ENCODE measurements at regions of chr12 and their contacts with region 1.

Region 1: DNA sequence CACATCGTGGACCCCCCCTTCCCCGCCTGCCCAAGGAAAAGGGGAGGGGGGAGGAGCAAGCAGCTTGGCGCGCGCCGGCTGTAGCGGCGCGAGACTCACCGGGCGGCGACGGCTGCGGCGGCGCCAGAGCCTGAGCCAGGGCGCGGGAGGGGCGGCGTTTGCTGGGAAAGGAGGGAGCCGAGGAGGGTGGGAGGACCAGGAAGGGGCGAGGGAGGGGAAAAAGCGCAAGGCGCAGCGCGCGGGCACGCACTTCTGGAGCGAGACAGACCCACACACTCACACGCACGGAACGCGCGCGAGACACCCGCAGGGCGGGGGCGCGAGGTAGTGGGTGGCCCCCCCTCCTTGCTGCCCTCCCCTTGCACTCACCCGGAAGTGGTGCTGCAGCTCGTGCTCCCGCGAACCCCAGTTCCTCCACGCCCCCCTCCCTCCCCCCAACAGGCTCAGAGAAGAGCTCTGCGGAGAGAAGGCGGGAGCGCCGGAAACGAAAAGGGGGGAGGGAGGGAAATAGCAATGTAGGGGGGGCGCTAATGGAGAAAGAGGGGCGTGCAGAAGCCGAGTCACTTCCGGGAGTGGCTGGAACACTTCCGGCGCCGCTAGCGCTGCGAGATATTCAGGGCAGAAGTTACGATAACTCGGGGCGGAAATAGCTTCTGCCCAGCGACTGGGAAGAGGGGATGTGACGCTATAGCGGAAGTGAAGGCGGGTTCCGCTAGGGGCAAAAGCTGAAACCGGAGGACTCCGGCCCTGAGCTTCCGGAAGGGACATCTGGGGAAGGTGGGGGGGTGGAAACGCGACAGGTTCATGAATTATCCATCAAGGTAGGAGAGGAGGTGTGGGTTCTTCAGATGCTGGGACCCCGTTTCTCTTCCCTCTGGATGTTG is at the start of gene ZNF384:
- DNase-seq: peak; percentile 87 to 97 (median 90)
- ATAC-seq: peak; percentile 88
- H3K4me3 ChIP-seq: peak within 1 kb of the TSS; percentile 70
- H3K27ac ChIP-seq: peak within 1 kb of the TSS; percentile 99
- H3K4me1 ChIP-seq: peaks cover 2 to 5% of the 10 kb centered on the region in 2 experiments; a peak in 2 of 5 replicates
- H3K27me3 ChIP-seq: no peaks in the 10 kb centered on the region
- CTCF ChIP-seq: peak in 2 of 3 experiments; percentile 12 to 13; a peak in 1 of 6 replicates
- EP300 ChIP-seq: 0 out of 2 replicates have a peak, but pooled peaks have one; percentile 12
- POLR2A ChIP-seq: peak; percentile 77
- RAD21 ChIP-seq: no peak
- polyA plus RNA-seq, gene ZNF384: 0.36 to 0.42 TPM

Region 2: GRCh38 chr12:6554168-6555017 is 134.8 kb before region 1 on chr12:
- CTCF ChIA-PET with region 1: no interaction called
- POLR2A ChIA-PET with region 1: no interaction called
- in situ Hi-C with region 1: no loop called
- intact Hi-C with region 1: loop called (anchors 5 kb)
- DNase-seq: peak; percentile 63 to 81 (median 73)
- ATAC-seq: peak; percentile 96
- H3K4me3 ChIP-seq: no peak overlapping the region
- H3K27ac ChIP-seq: no peak overlapping the region
- H3K4me1 ChIP-seq: peaks cover 2 to 36% of the 10 kb centered on the region in 2 experiments; a peak in 4 of 5 replicates
- H3K27me3 ChIP-seq: no peaks in the 10 kb centered on the region
- CTCF ChIP-seq: peak; percentile 66 to 77 (median 69)
- EP300 ChIP-seq: no peak
- POLR2A ChIP-seq: no peak
- RAD21 ChIP-seq: peak in 1 of 2 experiments; percentile 61; a peak in 2 of 4 replicates

Region 3: GRCh38 chr12:6613776-6614512 is 75.3 kb before region 1 on chr12:
- CTCF ChIA-PET with region 1: interaction called, 4 read pairs
- POLR2A ChIA-PET with region 1: interaction called, 4 read pairs
- in situ Hi-C with region 1: no loop called
- intact Hi-C with region 1: loop called (anchors 2 kb)
- DNase-seq: peak; percentile 82 to 95 (median 87)
- ATAC-seq: peak; percentile 89
- H3K4me3 ChIP-seq: no peak overlapping the region
- H3K27ac ChIP-seq: peak overlapping the region; percentile 85
- H3K4me1 ChIP-seq: peaks cover 29 to 43% of the 10 kb centered on the region in 2 experiments
- H3K27me3 ChIP-seq: no peaks in the 10 kb centered on the region
- CTCF ChIP-seq: peak; percentile 24 to 44 (median 27); a peak in 2 of 6 replicates
- EP300 ChIP-seq: no peak
- POLR2A ChIP-seq: peak; percentile 52
- RAD21 ChIP-seq: 0 out of 4 replicates have a peak, but pooled peaks have one; percentile 9 to 11

Region 4: GRCh38 chr12:6662906-6663742 is 26.1 kb before region 1 on chr12 and contains the start of gene ING4:
- CTCF ChIA-PET with region 1: no interaction called
- POLR2A ChIA-PET with region 1: interaction called, 3 read pairs
- in situ Hi-C with region 1: no loop called
- intact Hi-C with region 1: loop called (anchors 2 kb)
- DNase-seq: peak; percentile 90 to 98 (median 92)
- ATAC-seq: peak; percentile 98
- H3K4me3 ChIP-seq: peak within 1 kb of the TSS; percentile 62
- H3K27ac ChIP-seq: peak within 1 kb of the TSS; percentile 96
- H3K4me1 ChIP-seq: peaks cover 0 to 12% of the 10 kb centered on the region in 2 experiments; a peak in 2 of 5 replicates
- H3K27me3 ChIP-seq: no peaks in the 10 kb centered on the region
- CTCF ChIP-seq: no peak
- EP300 ChIP-seq: peak; percentile 45
- POLR2A ChIP-seq: peak; percentile 72
- RAD21 ChIP-seq: no peak; a peak in 1 of 4 replicates
- polyA plus RNA-seq, gene ING4: 6.6 to 8.4 TPM

Region 5: GRCh38 chr12:6723607-6724396 is 34.6 kb after region 1 on chr12 and contains the start of gene COPS7A:
- CTCF ChIA-PET with region 1: interaction called, 3 read pairs
- POLR2A ChIA-PET with region 1: interaction called, 12 read pairs
- in situ Hi-C with region 1: no loop called
- intact Hi-C with region 1: loop called (anchors 5 kb)
- DNase-seq: peak; percentile 94 to 97 (median 95)
- ATAC-seq: peak; percentile 98
- H3K4me3 ChIP-seq: peak within 1 kb of the TSS; percentile 54
- H3K27ac ChIP-seq: peak within 1 kb of the TSS; percentile 88
- H3K4me1 ChIP-seq: peaks cover 10 to 25% of the 10 kb centered on the region in 2 experiments; a peak in 4 of 5 replicates
- H3K27me3 ChIP-seq: no peaks in the 10 kb centered on the region
- CTCF ChIP-seq: peak in 1 of 3 experiments; percentile 30; a peak in 2 of 6 replicates
- EP300 ChIP-seq: peak; percentile 52
- POLR2A ChIP-seq: peak; percentile 76
- RAD21 ChIP-seq: no peak
- polyA plus RNA-seq, gene COPS7A: 12.7 to 24.3 TPM

Measured in K562 (cell line).